Activated T-helper 1 cell treated with anti-CD3 and anti-CD28 coated beads, Interleukin-12 subunit alpha, Interleukin-12 subunit beta, Interleukin-2, Interleukin-4 antibody, amounts not matched to agents 30 ng/mL and 10 ng/mL and 1 ng/mL, durations not matched to agents 14 hours and 24 hours and 36 hours (primary cell): ENCODE measurements at regions of chr2 and their contacts with region 1.

Region 1: GRCh38 chr2:73828818-73829570 is at the start of gene STAMBP:
- DNase-seq: peak; percentile 90
- H3K4me3 Mint-ChIP-seq: peak within 1 kb of the TSS; percentile 98
- H3K27ac Mint-ChIP-seq: peak within 1 kb of the TSS; percentile 99
- H3K4me1 Mint-ChIP-seq: peaks cover 59% of the 10 kb centered on the region
- H3K27me3 Mint-ChIP-seq: peaks cover 5% of the 10 kb centered on the region
- total RNA-seq, gene STAMBP: 50.8 and 56.0 TPM in 2 replicates

Region 2: GRCh38 chr2:73779467-73780236 is 49.3 kb before region 1 on chr2 and contains the start of gene DUSP11:
- intact Hi-C with region 1: loop called (anchors 1 kb)
- DNase-seq: peak; percentile 94
- H3K4me3 Mint-ChIP-seq: peak within 1 kb of the TSS; percentile 99
- H3K27ac Mint-ChIP-seq: peak within 1 kb of the TSS; percentile 94
- H3K4me1 Mint-ChIP-seq: peaks cover 26% of the 10 kb centered on the region
- H3K27me3 Mint-ChIP-seq: no peaks in the 10 kb centered on the region
- total RNA-seq, gene DUSP11: 42.1 and 42.4 TPM in 2 replicates

Region 3: GRCh38 chr2:73870084-73870483 is 41.1 kb after region 1 on chr2:
- intact Hi-C with region 1: no loop called
- DNase-seq: no peak
- H3K4me3 Mint-ChIP-seq: no peak overlapping the region
- H3K27ac Mint-ChIP-seq: no peak overlapping the region
- H3K4me1 Mint-ChIP-seq: no peaks in the 10 kb centered on the region
- H3K27me3 Mint-ChIP-seq: no peaks in the 10 kb centered on the region

Region 4: GRCh38 chr2:73886357-73886756 is 57.4 kb after region 1 on chr2:
- intact Hi-C with region 1: loop called (anchors 1 kb)
- DNase-seq: no peak
- H3K4me3 Mint-ChIP-seq: peak overlapping the region; percentile 63
- H3K27ac Mint-ChIP-seq: peak overlapping the region; percentile 84
- H3K4me1 Mint-ChIP-seq: peaks cover 29% of the 10 kb centered on the region
- H3K27me3 Mint-ChIP-seq: peaks cover 4% of the 10 kb centered on the region

Region 5: GRCh38 chr2:73963385-73964120 is 134.6 kb after region 1 on chr2:
- intact Hi-C with region 1: loop called (anchors 1 kb)
- DNase-seq: no peak
- H3K4me3 Mint-ChIP-seq: peak overlapping the region; percentile 1
- H3K27ac Mint-ChIP-seq: peak overlapping the region; percentile 86
- H3K4me1 Mint-ChIP-seq: peaks cover 30% of the 10 kb centered on the region
- H3K27me3 Mint-ChIP-seq: no peaks in the 10 kb centered on the region

Region 6: GRCh38 chr2:74104839-74105238 is 275.8 kb after region 1 on chr2:
- intact Hi-C with region 1: loop called (anchors 1 kb)
- DNase-seq: no peak
- H3K4me3 Mint-ChIP-seq: no peak overlapping the region
- H3K27ac Mint-ChIP-seq: no peak overlapping the region
- H3K4me1 Mint-ChIP-seq: no peaks in the 10 kb centered on the region
- H3K27me3 Mint-ChIP-seq: no peaks in the 10 kb centered on the region

Region 7: DNA sequence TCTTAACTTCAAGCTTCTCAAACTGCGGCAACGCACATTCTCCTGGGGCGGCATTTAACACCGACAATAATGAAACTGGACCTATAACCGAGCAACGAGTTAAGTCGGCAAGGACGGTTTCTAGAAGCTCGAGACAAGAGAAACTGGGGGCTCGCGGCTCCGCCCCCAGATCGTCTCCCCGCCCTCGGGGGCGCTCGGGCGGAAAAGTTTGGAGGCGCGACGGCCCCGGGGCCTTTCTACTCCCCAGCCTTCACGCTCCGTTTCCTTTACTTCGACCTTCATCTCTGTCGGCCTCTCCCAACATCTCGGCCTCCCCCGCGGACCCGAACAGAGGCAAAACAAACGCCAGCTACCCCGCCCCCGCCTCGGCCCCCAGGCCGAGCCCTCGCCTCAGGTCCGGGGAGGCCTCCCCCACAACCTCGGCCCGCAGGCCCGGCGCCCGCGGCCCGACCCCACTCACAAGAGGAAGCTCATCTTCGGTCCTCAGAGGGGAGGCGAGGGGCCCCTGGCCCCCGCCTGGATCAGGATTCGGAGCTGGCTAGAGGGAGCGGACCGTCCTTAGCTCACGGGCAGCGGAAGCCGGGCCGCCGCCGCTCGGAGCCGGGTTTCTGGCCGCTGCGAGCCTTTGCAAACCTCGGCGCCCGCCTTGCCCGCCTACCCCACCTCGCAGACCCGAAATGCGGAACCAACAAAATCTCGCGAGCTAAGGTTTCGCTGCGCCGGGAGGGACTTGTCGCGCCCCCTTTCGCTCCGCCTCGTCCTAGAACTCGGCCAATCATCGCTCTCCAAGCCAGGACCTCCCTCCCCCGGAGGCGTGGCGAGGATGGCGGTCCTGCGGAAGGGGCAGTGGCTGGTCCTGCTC is 349.4 kb after region 1 on chr2 and contains the start of gene MOB1A:
- intact Hi-C with region 1: loop called (anchors 1 kb)
- DNase-seq: peak; percentile 99
- H3K4me3 Mint-ChIP-seq: peak within 1 kb of the TSS; percentile 88
- H3K27ac Mint-ChIP-seq: peak within 1 kb of the TSS; percentile 85
- H3K4me1 Mint-ChIP-seq: peaks cover 40% of the 10 kb centered on the region
- H3K27me3 Mint-ChIP-seq: no peaks in the 10 kb centered on the region
- total RNA-seq, gene MOB1A: 207 and 221 TPM in 2 replicates

Region 8: DNA sequence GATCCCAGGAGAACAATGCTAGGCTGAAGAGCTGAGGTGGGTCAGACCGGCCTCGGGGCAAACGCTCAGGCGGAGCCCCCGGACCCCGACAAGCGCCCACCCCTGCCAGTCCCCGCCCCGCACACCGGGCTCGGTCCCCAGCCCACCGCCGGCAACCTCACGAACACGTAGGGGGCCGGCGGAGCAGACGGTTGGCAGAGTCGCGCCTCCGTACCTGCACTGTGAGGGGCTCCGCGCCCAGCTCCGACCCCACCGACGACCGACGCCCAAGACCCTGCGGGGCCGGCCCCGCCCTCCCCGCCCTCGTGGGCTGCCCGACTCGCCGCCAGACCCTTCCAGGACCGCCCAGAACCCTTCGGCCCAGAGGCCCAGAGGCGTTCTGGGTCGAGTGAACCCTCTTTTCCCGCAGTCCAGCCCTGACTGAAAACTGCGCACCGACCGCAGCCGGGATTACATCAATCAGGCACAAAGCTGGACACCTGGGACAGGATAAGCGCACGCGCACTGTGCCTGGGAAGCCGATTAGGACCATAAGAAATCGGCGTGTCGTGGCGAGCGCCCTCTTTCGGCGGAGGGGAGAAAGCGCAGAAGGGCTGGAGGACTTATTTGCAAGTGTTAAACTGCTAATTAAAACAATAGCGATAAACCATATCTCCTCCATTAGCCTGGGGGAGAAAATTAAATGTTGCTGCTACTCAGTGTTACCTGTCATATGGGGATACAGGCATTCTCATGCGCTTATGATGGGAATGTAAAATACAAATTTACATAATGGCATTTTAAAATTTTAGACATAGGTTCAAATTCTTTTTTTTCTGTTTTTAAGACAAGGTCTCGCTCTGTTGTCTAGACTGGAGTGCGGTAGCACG is 562.8 kb after region 1 on chr2:
- intact Hi-C with region 1: loop called (anchors 1 kb)
- DNase-seq: peak; percentile 88
- H3K4me3 Mint-ChIP-seq: peak overlapping the region; percentile 43
- H3K27ac Mint-ChIP-seq: peak overlapping the region; percentile 98
- H3K4me1 Mint-ChIP-seq: no peaks in the 10 kb centered on the region
- H3K27me3 Mint-ChIP-seq: peaks cover 10% of the 10 kb centered on the region

Region 9: GRCh38 chr2:74566754-74567085 is 737.7 kb after region 1 on chr2:
- intact Hi-C with region 1: no loop called
- DNase-seq: no peak
- H3K4me3 Mint-ChIP-seq: peak overlapping the region; percentile 23
- H3K27ac Mint-ChIP-seq: peak overlapping the region; percentile 79
- H3K4me1 Mint-ChIP-seq: peaks cover 61% of the 10 kb centered on the region
- H3K27me3 Mint-ChIP-seq: no peaks in the 10 kb centered on the region